Activated CD4-positive, alpha-beta T cell treated with anti-CD3 and anti-CD28 coated beads for 36 hours (primary cell): ENCODE measurements at regions of chr20 and their contacts with region 1.

Region 1: GRCh38 chr20:2873010-2873746 is at the start of gene PTPRA:
- DNase-seq: peak; percentile 96
- ATAC-seq: peak; percentile 91
- H3K4me3 Mint-ChIP-seq: peak within 1 kb of the TSS; percentile 84
- H3K27ac Mint-ChIP-seq: peak within 1 kb of the TSS; percentile 95
- H3K4me1 Mint-ChIP-seq: peaks cover 44% of the 10 kb centered on the region
- H3K27me3 Mint-ChIP-seq: no peaks in the 10 kb centered on the region
- total RNA-seq, gene PTPRA: 58.5 to 86.3 TPM

Region 2: GRCh38 chr20:2688041-2688591 is 185.1 kb before region 1 on chr20:
- CTCF ChIA-PET with region 1: no interaction called
- POLR2A ChIA-PET with region 1: interaction called, 3 read pairs
- intact Hi-C with region 1: loop called in 1 of 2 experiments (anchors 1 kb)
- DNase-seq: peak; percentile 91
- ATAC-seq: peak; percentile 95
- H3K4me3 Mint-ChIP-seq: no peak overlapping the region
- H3K27ac Mint-ChIP-seq: peak overlapping the region; percentile 33
- H3K4me1 Mint-ChIP-seq: peaks cover 18% of the 10 kb centered on the region
- H3K27me3 Mint-ChIP-seq: peaks cover 18% of the 10 kb centered on the region

Region 3: GRCh38 chr20:2883726-2884637 is 10.8 kb after region 1 on chr20:
- CTCF ChIA-PET with region 1: interaction called, 3 read pairs
- POLR2A ChIA-PET with region 1: no interaction called
- intact Hi-C with region 1: loop called in 1 of 2 experiments (anchors 1 kb)
- DNase-seq: no peak
- ATAC-seq: peak; percentile 24
- H3K4me3 Mint-ChIP-seq: no peak overlapping the region
- H3K27ac Mint-ChIP-seq: peak overlapping the region; percentile 8
- H3K4me1 Mint-ChIP-seq: peaks cover 60% of the 10 kb centered on the region
- H3K27me3 Mint-ChIP-seq: no peaks in the 10 kb centered on the region

Region 4: GRCh38 chr20:3000852-3001523 is 127.8 kb after region 1 on chr20:
- CTCF ChIA-PET with region 1: interaction called, 7 read pairs
- POLR2A ChIA-PET with region 1: no interaction called
- intact Hi-C with region 1: loop called in 1 of 2 experiments (anchors 1 kb)
- DNase-seq: peak; percentile 23
- ATAC-seq: peak; percentile 98
- H3K4me3 Mint-ChIP-seq: no peak overlapping the region
- H3K27ac Mint-ChIP-seq: peak overlapping the region; percentile 59
- H3K4me1 Mint-ChIP-seq: peaks cover 11% of the 10 kb centered on the region
- H3K27me3 Mint-ChIP-seq: no peaks in the 10 kb centered on the region

Region 5: DNA sequence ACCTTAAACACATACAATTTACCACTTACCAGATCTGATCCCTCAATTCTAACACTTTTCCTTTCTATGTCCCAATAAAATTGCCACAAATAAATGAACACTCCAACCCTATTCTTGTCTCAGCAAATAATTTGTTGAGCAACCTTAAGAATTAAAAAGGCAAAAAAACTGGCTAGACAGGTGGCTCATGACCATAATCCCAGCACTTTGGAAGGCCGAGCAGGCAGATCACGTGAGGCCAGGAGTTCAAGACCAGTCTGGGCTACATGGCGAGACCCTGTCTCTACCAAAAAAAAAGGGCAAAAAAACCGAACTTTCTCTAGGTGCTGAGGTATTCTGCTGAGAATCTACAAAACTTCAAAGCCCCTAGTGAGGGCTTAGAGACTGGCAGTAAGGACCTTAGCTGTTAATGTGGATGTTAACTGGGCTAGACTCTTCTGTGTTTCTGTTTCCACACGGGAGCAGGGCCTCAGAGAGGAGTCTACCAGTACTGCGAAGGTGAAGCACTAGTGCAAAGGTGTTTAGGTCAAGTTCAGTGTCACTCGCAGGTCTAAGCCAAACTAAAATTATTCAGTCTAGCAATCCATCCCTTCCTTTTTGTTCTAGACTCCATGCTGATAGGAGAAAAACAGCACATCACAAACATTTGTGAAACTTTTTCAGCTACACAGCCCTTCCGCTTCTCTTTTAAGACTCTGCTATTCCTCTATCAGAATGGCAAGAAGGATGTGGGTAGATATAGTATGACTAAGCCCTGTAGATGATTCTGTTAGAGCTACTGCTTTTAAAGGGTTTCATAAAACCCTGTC is 283.8 kb after region 1 on chr20:
- CTCF ChIA-PET with region 1: no interaction called
- POLR2A ChIA-PET with region 1: interaction called, 3 read pairs
- intact Hi-C with region 1: loop called in 1 of 2 experiments (anchors 2 kb)
- DNase-seq: peak; percentile 41
- ATAC-seq: peak; percentile 89
- H3K4me3 Mint-ChIP-seq: peak overlapping the region; percentile 91
- H3K27ac Mint-ChIP-seq: peak overlapping the region; percentile 91
- H3K4me1 Mint-ChIP-seq: peaks cover 60% of the 10 kb centered on the region
- H3K27me3 Mint-ChIP-seq: no peaks in the 10 kb centered on the region